Activated CD4-positive, alpha-beta T cell treated with anti-CD3 and anti-CD28 coated beads for 36 hours (primary cell): ENCODE measurements at regions of chr7 and their contacts with region 1.

Region 1: DNA sequence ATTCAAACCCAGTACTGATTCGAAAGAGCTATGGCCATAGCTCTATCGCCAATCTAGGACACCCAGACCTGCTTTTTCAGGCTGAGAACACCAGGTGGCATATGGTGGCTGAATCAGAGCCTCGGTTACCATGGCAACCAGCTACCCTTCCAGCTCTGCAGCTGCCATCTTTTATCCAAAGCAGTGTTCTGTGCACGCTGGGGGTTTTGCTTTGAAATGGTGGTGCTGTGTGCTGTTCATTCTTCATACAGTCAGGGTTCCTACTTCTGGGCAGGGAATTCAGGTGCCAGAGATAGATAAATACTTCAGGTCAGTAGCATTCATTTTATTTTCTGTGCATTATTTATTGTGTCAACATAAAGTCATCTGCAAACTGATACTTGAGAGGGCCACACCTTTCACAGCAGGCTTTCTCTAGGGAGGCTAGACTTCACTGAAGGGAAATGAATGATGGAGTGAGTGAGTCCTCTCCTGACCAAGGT is 85.4 kb downstream of the AKR1D1 start:
- DNase-seq: peak; percentile 86
- ATAC-seq: peak; percentile 99
- H3K4me3 Mint-ChIP-seq: no peak overlapping the region
- H3K27ac Mint-ChIP-seq: no peak overlapping the region
- H3K4me1 Mint-ChIP-seq: no peaks in the 10 kb centered on the region
- H3K27me3 Mint-ChIP-seq: no peaks in the 10 kb centered on the region

Region 2: DNA sequence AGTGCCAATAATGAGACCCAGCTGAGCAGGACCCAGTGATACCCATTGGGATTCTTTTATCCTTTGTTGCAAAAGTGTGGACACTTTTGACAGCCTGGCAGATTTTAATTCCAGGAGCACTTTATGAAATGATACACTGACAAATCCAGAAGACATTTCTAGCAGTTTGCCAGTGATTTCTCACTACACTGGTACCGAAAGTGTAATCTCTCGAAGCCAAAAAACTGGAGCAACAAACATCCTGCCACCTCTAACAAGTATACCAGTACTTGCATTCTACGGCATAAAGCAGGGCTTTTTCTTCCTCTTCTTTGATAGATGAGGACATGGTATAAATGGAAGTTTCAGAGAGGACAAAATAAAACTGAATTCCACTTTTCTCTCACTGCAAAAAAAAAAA is 113.7 kb before region 1 on chr7:
- CTCF ChIA-PET with region 1: no interaction called
- POLR2A ChIA-PET with region 1: no interaction called
- intact Hi-C with region 1: no loop called
- DNase-seq: no peak
- ATAC-seq: no peak
- H3K4me3 Mint-ChIP-seq: no peak overlapping the region
- H3K27ac Mint-ChIP-seq: no peak overlapping the region
- H3K4me1 Mint-ChIP-seq: no peaks in the 10 kb centered on the region
- H3K27me3 Mint-ChIP-seq: peaks cover 6% of the 10 kb centered on the region

Region 3: GRCh38 chr7:138459413-138460175 is 298.0 kb after region 1 on chr7:
- CTCF ChIA-PET with region 1: no interaction called
- POLR2A ChIA-PET with region 1: no interaction called
- intact Hi-C with region 1: loop called in 1 of 2 experiments (anchors 5 kb)
- DNase-seq: peak; percentile 99
- ATAC-seq: peak; percentile 88
- H3K4me3 Mint-ChIP-seq: peak overlapping the region; percentile 85
- H3K27ac Mint-ChIP-seq: peak overlapping the region; percentile 85
- H3K4me1 Mint-ChIP-seq: peaks cover 25% of the 10 kb centered on the region
- H3K27me3 Mint-ChIP-seq: no peaks in the 10 kb centered on the region

Region 4: DNA sequence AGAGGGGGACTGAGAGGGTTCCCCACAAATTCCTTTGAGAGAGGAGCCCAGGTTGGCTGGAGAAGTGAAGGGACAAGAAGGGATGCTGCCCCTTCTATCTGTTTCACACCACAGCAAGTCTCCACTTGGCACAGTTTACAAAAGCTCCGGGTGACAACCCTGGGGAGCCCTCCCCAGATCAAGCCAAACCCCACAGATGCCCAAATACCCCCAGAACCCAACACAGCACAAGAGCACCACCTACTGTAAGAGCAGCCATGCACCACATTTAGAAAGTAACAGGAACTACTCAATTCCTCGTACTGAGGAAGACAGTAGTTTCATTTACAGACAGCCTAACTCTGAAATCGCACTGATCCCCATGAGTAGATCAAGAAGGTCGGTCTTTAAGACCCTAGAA is 704.2 kb after region 1 on chr7:
- CTCF ChIA-PET with region 1: no interaction called
- POLR2A ChIA-PET with region 1: no interaction called
- intact Hi-C with region 1: loop called (anchors 1 kb)
- DNase-seq: peak; percentile 66
- ATAC-seq: peak; percentile 84
- H3K4me3 Mint-ChIP-seq: no peak overlapping the region
- H3K27ac Mint-ChIP-seq: no peak overlapping the region
- H3K4me1 Mint-ChIP-seq: peaks cover 16% of the 10 kb centered on the region
- H3K27me3 Mint-ChIP-seq: no peaks in the 10 kb centered on the region